ENCODE measurements at regions of chr11 and their contacts with region 1.

Region 1: DNA sequence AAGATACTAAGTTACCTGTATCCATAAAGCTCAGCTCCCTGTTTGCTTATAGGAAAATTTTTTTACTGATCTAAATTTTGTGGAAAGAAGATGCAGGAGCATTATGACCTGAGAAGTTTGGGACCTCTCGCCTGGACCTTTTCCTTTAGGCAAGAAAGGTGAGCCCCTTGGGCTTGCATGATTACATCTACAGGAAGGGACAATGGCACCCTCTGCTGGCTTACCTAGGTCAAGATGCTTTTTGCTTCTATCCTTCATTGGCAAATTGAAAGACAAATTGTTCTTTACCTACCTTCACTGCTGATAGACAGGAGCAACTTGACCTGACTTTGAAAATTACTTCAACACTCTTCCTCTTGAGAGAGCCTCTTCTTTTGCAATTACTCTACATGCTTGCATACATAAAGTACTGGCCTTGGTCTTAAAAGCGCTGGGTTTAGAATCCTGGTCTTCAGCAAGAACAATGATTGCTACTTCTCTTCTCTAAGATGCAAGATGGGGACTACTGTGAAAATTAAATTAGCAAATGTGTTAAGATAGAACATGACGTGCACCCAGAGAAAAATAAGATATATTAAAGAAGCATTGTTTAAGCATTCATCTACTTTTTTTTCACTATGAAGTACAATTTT is 147.2 kb downstream of the TRPC6 start:
- DNase-seq: peak; percentile 21
- H3K4me3 ChIP-seq: no peak overlapping the region
- H3K27ac ChIP-seq: no peak overlapping the region
- H3K4me1 ChIP-seq: no peaks in the 10 kb centered on the region
- H3K27me3 ChIP-seq: no peaks in the 10 kb centered on the region
- CTCF ChIP-seq: peak in 3 of 4 experiments; percentile 43 to 56 (median 53)
- POLR2A ChIP-seq: no peak

Region 2: DNA sequence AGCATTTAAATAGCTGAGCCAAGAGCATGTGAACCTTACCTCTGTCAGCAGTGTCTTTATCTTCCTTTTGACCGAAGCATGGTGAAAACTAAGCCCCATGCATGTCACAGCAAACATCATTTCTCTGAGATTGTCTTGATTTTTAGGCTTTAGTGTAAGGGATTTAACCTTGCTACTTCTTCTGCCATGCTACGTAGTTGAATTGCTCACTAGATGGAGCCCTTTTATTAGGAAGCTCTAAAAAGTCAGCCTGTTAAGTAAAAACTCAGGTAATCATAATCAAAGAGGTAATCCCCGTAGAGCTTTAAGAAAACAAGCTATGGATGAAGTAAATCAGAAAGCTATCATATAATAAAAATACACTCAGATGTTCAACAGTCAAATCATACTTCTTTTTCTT is 456.5 kb before region 1 on chr11:
- intact Hi-C with region 1: loop called (anchors 5 kb)
- DNase-seq: no peak
- H3K4me3 ChIP-seq: no peak overlapping the region
- H3K27ac ChIP-seq: no peak overlapping the region
- H3K4me1 ChIP-seq: no peaks in the 10 kb centered on the region
- H3K27me3 ChIP-seq: no peaks in the 10 kb centered on the region
- CTCF ChIP-seq: peak in 3 of 4 experiments; percentile 12 to 54 (median 20)
- POLR2A ChIP-seq: no peak

Region 3: GRCh38 chr11:101127699-101128570 is 308.7 kb before region 1 on chr11:
- intact Hi-C with region 1: loop called (anchors 10 kb)
- DNase-seq: no peak
- H3K4me3 ChIP-seq: peak overlapping the region; percentile 33 to 36
- H3K27ac ChIP-seq: peak overlapping the region; percentile 51 to 70
- H3K4me1 ChIP-seq: no peaks in the 10 kb centered on the region
- H3K27me3 ChIP-seq: peaks cover 2% of the 10 kb centered on the region
- CTCF ChIP-seq: peak in 1 of 4 experiments; percentile 8
- POLR2A ChIP-seq: no peak

Region 4: DNA sequence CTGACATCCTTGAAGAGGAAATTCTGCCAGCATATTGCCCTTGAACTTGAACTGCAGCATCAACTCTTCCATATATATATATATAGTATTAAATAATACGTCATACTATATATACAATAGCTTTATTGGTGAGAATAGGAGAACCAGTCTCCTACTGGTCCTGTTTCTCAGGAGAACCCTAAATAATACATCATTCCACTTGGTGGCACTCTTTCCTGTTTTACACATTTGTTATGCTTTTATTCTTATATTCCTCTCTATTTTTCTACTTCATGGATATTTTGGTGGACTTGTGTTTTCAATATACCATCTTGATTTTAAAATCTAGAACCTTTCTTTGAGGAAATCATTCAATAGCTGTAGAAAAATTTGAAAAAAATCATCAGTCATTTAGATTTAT is 46.1 kb before region 1 on chr11:
- intact Hi-C with region 1: loop called (anchors 5 kb)
- DNase-seq: no peak
- H3K4me3 ChIP-seq: no peak overlapping the region
- H3K27ac ChIP-seq: no peak overlapping the region
- H3K4me1 ChIP-seq: no peaks in the 10 kb centered on the region
- H3K27me3 ChIP-seq: no peaks in the 10 kb centered on the region
- CTCF ChIP-seq: peak in 1 of 4 experiments; percentile 24
- POLR2A ChIP-seq: no peak

Measured in prostate gland (tissue), 2 donors.